Ascending aorta (tissue), 2 donors: ENCODE measurements at regions of chr13 and their contacts with region 1.

Region 1: DNA sequence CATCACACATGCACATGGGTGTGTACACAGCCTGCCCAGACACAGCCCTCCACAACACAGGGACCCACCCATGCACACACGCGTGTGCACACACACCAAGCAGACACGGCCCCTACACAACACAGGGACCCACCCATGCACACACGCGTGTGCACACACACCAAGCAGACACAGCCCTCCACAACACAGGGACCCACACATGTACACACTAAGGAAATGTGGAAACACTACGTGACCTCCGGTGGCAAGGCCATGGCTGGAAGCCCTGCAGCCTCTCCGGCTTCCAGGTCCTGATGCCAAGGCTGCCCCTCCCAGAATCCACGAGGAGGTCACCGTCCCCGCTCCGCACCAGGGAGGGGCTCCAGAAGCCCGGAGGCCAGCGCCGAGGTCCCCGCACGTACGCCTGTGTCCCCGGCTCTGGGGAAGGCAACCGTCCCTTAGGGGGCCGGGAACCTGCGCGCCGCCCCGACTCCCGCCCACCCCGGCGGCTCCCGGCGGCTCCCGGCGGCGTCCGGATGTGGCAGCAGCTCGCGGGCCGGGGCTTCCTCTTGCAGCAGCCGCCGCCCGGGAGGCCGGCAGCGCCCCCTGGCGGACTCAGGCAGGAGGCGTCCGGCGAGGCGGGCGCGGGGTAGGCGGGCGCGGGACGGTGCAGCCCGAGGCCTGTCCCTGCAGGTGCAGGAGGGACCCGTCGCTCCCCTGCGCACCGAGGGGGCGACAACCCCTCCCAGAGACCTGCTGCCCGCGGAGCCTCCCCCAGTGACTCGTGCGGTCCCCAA is 29.8 kb upstream of the GRTP1 start:
- DNase-seq: peak in 1 of 2 donors; percentile 89
- H3K4me3 ChIP-seq: peak overlapping the region; percentile 76 to 80
- H3K27ac ChIP-seq: peak overlapping the region in 1 of 2 donors; percentile 19
- H3K4me1 ChIP-seq: peaks cover 0 to 9% of the 10 kb centered on the region in 2 donors
- H3K27me3 ChIP-seq: no peaks in the 10 kb centered on the region
- CTCF ChIP-seq: peak; percentile 47 to 92 (median 72)

Region 2: GRCh38 chr13:112942689-112943308 is 451.0 kb before region 1 on chr13:
- intact Hi-C with region 1: loop called (anchors 5 kb)
- DNase-seq: peak; percentile 79 to 97
- H3K4me3 ChIP-seq: peak overlapping the region; percentile 69 to 80
- H3K27ac ChIP-seq: peak overlapping the region in 1 of 2 donors; percentile 5
- H3K4me1 ChIP-seq: peaks cover 9 to 10% of the 10 kb centered on the region in 2 donors
- H3K27me3 ChIP-seq: no peaks in the 10 kb centered on the region
- CTCF ChIP-seq: peak; percentile 78 to 97 (median 83)

Region 3: GRCh38 chr13:113153810-113154748 is 239.7 kb before region 1 on chr13:
- intact Hi-C with region 1: no loop called
- DNase-seq: peak in 1 of 2 donors; percentile 88
- H3K4me3 ChIP-seq: peak overlapping the region; percentile 39 to 63
- H3K27ac ChIP-seq: peak overlapping the region; percentile 51 to 59
- H3K4me1 ChIP-seq: peaks cover 0 to 11% of the 10 kb centered on the region in 2 donors
- H3K27me3 ChIP-seq: no peaks in the 10 kb centered on the region
- CTCF ChIP-seq: no peak

Region 4: GRCh38 chr13:113275387-113275786 is 118.4 kb before region 1 on chr13:
- intact Hi-C with region 1: loop called (anchors 5 kb)
- DNase-seq: no peak
- H3K4me3 ChIP-seq: no peak overlapping the region
- H3K27ac ChIP-seq: no peak overlapping the region
- H3K4me1 ChIP-seq: no peaks in the 10 kb centered on the region
- H3K27me3 ChIP-seq: no peaks in the 10 kb centered on the region
- CTCF ChIP-seq: peak in 2 of 3 experiments; percentile 30 to 45

Region 5: DNA sequence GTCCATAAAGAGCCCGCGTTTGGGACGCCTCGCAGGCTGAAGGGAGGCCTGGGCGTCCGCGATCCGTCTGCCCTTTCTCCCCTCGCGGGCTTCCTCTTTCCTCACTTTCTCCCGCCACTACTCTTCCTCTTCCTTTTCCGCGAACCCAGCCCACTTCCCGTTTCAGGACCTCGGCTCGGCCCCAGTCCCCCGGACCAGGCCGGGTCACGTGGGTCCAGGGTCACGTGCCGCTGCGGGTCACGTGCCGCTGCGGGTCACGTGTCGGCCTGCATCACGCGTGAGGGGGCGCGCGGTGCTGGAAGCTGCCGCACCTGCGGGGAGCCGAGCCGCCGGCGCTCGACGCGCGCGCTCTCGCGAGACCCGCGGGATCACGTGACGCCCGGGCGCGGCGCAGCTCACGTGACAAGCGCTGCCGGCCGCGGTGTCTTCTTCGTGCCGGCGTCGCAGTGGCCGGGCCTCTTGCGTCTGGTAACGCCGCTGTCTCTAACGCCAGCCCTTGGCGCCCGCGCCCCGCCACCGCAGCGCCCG is 96.8 kb before region 1 on chr13 and contains the start of gene LAMP1:
- intact Hi-C with region 1: loop called (anchors 1 kb)
- DNase-seq: peak; percentile 91 to 100
- H3K4me3 ChIP-seq: peak within 1 kb of the TSS; percentile 93 to 95
- H3K27ac ChIP-seq: peak within 1 kb of the TSS; percentile 67 to 73
- H3K4me1 ChIP-seq: peaks cover 0 to 7% of the 10 kb centered on the region in 2 donors
- H3K27me3 ChIP-seq: no peaks in the 10 kb centered on the region
- CTCF ChIP-seq: peak in 1 of 3 experiments; percentile 25
- total RNA-seq, gene LAMP1: 126 TPM

Region 6: GRCh38 chr13:113410472-113411201 is 16.9 kb after region 1 on chr13:
- intact Hi-C with region 1: loop called (anchors 2 kb)
- DNase-seq: peak; percentile 35 to 92
- H3K4me3 ChIP-seq: peak overlapping the region in 1 of 2 donors; percentile 31
- H3K27ac ChIP-seq: peak overlapping the region; percentile 84 to 97
- H3K4me1 ChIP-seq: peaks cover 15 to 39% of the 10 kb centered on the region in 2 donors
- H3K27me3 ChIP-seq: no peaks in the 10 kb centered on the region
- CTCF ChIP-seq: no peak

Region 7: GRCh38 chr13:113452942-113453901 is 59.5 kb after region 1 on chr13 and contains the start of gene ADPRHL1:
- intact Hi-C with region 1: loop called (anchors 2 kb)
- DNase-seq: peak in 1 of 2 donors; percentile 41
- H3K4me3 ChIP-seq: no peak within 1 kb of the TSS
- H3K27ac ChIP-seq: no peak within 1 kb of the TSS
- H3K4me1 ChIP-seq: no peaks in the 10 kb centered on the region
- H3K27me3 ChIP-seq: no peaks in the 10 kb centered on the region
- CTCF ChIP-seq: no peak
- total RNA-seq, gene ADPRHL1: 11.3 TPM